HEK293 (cell line): ENCODE measurements at regions of chr17 and their contacts with region 1.

Region 1: GRCh38 chr17:38667099-38667786 is 7.5 kb downstream of the EPOP start:
- H3K4me3 ChIP-seq: no peak overlapping the region
- H3K27ac ChIP-seq: no peak overlapping the region
- H3K4me1 ChIP-seq: peaks cover 4% of the 10 kb centered on the region; the same call in 1 of the 2 replicates
- CTCF ChIP-seq: peak; percentile 88

Region 2: DNA sequence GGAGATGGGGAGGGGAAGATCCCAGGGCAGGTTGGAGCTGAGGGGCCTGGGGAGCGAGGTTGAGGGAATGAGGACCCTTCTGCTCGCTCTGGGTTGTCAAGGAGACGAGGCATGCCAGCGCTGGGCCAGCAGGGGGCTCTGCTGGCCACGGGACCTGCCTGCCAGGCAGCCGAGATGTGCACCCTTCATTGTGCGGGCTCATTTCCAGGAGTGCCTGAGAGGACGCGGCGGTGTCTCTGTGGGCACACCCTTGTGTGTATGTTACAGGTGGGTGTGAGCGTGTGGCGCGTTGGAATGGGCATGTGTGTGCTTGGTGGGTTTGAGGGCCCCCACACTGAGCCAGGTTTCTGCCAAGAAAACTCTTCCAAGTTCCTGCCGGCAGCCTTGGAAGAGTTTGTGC is 223.1 kb before region 1 on chr17:
- CTCF ChIA-PET with region 1: interaction called, 31 read pairs
- POLR2A ChIA-PET with region 1: no interaction called
- H3K4me3 ChIP-seq: no peak overlapping the region
- H3K27ac ChIP-seq: no peak overlapping the region
- H3K4me1 ChIP-seq: no peaks in the 10 kb centered on the region
- CTCF ChIP-seq: peak; percentile 94

Region 3: GRCh38 chr17:38539386-38539785 is 127.9 kb before region 1 on chr17:
- CTCF ChIA-PET with region 1: interaction called, 11 read pairs
- POLR2A ChIA-PET with region 1: no interaction called
- H3K4me3 ChIP-seq: no peak overlapping the region
- H3K27ac ChIP-seq: no peak overlapping the region
- H3K4me1 ChIP-seq: no peaks in the 10 kb centered on the region
- CTCF ChIP-seq: no peak

Region 4: GRCh38 chr17:38598536-38598935 is 68.7 kb before region 1 on chr17:
- CTCF ChIA-PET with region 1: interaction called, 53 read pairs
- POLR2A ChIA-PET with region 1: no interaction called
- H3K4me3 ChIP-seq: no peak overlapping the region
- H3K27ac ChIP-seq: no peak overlapping the region
- H3K4me1 ChIP-seq: peaks cover 18% of the 10 kb centered on the region
- CTCF ChIP-seq: no peak

Region 5: DNA sequence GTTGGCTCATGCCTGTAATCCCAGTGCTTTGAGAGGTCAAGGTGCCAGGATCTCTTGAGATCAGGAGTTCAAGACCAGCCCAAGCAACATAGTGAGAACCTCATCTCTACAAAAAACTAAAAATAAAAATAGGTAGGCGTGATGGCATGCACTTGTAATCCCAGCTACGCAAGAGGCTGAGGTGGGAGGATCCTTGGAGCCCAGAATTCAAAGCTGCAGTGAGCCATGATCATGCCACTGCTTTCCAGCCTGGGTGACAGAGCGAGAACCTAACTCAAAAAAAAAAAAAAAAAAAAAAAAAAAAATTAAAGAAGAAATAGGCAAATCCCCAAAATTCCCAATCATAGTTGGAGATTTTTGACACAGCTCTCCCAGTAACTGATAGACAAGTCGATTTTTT is 29.3 kb before region 1 on chr17:
- CTCF ChIA-PET with region 1: interaction called, 19 read pairs
- POLR2A ChIA-PET with region 1: no interaction called
- H3K4me3 ChIP-seq: no peak overlapping the region
- H3K27ac ChIP-seq: no peak overlapping the region
- H3K4me1 ChIP-seq: no peaks in the 10 kb centered on the region
- CTCF ChIP-seq: no peak

Region 6: GRCh38 chr17:38702166-38702899 is 35.1 kb after region 1 on chr17:
- CTCF ChIA-PET with region 1: no interaction called
- POLR2A ChIA-PET with region 1: no interaction called
- H3K4me3 ChIP-seq: peak overlapping the region; percentile 57
- H3K27ac ChIP-seq: peak overlapping the region; percentile 76
- H3K4me1 ChIP-seq: peaks cover 10% of the 10 kb centered on the region
- CTCF ChIP-seq: peak; percentile 47